HEK293T (cell line): ENCODE measurements at regions of chr11 and their contacts with region 1.

Region 1: GRCh38 chr11:105582497-105582896 is 27.4 kb upstream of the GRIA4 start:
- DNase-seq: no peak

Region 2: GRCh38 chr11:105524286-105524685 is 58.2 kb before region 1 on chr11:
- CTCF ChIA-PET with region 1: interaction called, 12 read pairs
- POLR2A ChIA-PET with region 1: no interaction called
- DNase-seq: no peak

Region 3: GRCh38 chr11:105552666-105553414 is 29.7 kb before region 1 on chr11:
- CTCF ChIA-PET with region 1: no interaction called
- POLR2A ChIA-PET with region 1: no interaction called
- DNase-seq: no peak

Region 4: DNA sequence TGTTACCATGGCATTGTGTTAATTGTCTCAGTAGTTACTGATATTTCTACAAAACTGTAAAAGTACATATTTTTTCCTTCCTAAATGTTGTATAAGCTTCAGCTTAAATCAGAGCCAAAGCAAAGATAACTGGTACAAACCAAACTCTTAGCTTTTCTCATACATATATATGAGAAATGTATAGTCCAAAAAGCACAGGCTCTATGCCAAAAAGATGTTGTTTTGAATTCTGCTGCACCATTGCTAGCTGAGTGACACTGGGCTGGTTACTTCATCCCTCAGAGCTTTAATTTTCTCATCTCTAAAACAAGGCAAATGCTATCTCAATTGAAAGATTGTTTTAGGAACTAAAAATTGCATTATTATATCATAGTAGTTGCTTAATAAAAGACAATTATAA is 20.7 kb after region 1 on chr11:
- CTCF ChIA-PET with region 1: no interaction called
- POLR2A ChIA-PET with region 1: no interaction called
- DNase-seq: no peak